ENCODE measurements at regions of chr15 and their contacts with region 1.

Region 1: DNA sequence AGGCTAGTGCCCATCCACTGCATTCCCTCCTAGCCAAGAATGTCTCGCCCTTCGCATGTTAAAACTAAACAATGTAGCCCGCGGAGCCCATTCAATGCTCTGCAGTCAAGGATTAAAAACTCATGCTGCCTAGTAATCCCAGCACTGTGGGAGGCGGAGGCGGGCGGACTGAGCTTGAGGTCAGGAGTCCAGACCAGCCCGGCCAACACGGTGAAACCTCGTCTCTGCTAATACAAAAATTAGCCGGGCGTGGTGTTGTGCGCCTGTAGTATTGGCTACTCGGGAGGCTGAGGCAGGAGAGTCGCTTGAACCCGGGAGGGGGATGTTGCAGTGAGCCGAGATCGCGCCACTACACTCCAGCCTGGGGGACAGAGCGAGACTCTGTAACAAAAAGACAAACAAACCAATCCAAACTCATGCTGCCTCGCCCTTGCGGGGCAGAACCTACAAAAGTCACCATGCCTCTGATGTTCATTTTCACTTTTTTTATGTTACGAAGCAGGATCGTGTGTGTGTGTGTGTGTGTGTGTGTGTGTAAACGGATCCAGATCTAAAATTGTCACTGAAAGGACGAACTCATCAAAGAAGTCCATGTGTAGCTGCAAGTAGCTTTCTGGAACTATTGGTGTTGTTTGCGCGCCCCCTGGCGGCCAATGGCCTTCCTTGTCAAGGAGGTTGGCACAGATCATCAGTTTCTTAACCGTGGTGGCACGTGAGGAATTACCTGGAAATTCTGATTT is 54.8 kb upstream of the SPESP1 start:
- DNase-seq: peak; percentile 90
- ATAC-seq: peak; percentile 75
- H3K4me3 ChIP-seq: no peak overlapping the region
- H3K4me3 Mint-ChIP-seq: peak overlapping the region; percentile 50
- H3K27ac ChIP-seq: no peak overlapping the region
- H3K27ac Mint-ChIP-seq: no peak overlapping the region
- H3K4me1 ChIP-seq: peaks cover 4% of the 10 kb centered on the region in 2 donors
- H3K4me1 Mint-ChIP-seq: peaks cover 3% of the 10 kb centered on the region
- H3K27me3 ChIP-seq: peaks cover 0 to 16% (median 8%) of the 10 kb centered on the region in 4 experiments
- H3K27me3 Mint-ChIP-seq: peaks cover 19% of the 10 kb centered on the region
- CTCF ChIP-seq: peak; percentile 85

Region 2: DNA sequence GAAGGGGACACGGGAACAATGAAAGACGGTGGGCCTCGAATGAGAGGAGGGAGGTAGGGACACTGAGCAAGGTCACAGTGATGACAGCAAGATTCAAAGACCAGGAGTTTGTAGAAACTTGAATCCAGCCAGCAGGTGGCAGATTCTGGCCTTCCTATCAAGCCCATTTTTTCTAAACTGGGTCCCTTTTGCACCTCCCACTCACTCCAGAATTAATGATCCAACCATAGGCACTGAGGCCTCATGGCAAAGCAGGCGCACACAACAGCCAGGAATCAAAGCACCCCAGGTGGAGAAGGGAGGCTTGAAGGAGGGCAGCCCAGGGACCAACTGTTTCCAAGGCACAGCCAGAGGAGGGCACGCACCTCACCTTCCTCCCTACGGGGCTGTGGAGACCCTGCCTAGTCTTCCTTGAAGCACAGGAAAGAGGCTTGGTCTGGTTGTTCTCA is 145.1 kb before region 1 on chr15:
- CTCF ChIA-PET with region 1: interaction called, 63 read pairs
- POLR2A ChIA-PET with region 1: no interaction called
- intact Hi-C with region 1: no loop called
- DNase-seq: peak; percentile 51
- ATAC-seq: no peak
- H3K4me3 ChIP-seq: no peak overlapping the region
- H3K4me3 Mint-ChIP-seq: no peak overlapping the region
- H3K27ac ChIP-seq: no peak overlapping the region
- H3K27ac Mint-ChIP-seq: no peak overlapping the region
- H3K4me1 ChIP-seq: peaks cover 15 to 23% of the 10 kb centered on the region in 2 donors
- H3K4me1 Mint-ChIP-seq: peaks cover 21% of the 10 kb centered on the region
- H3K27me3 ChIP-seq: peaks cover 0 to 2% (median 0%) of the 10 kb centered on the region in 4 experiments
- H3K27me3 Mint-ChIP-seq: peaks cover 4% of the 10 kb centered on the region
- CTCF ChIP-seq: peak; percentile 58

Region 3: GRCh38 chr15:68783226-68784058 is 92.1 kb before region 1 on chr15:
- CTCF ChIA-PET with region 1: interaction called, 138 read pairs
- POLR2A ChIA-PET with region 1: no interaction called
- intact Hi-C with region 1: loop called (anchors 1 kb)
- DNase-seq: peak; percentile 74
- ATAC-seq: peak; percentile 84
- H3K4me3 ChIP-seq: no peak overlapping the region
- H3K4me3 Mint-ChIP-seq: no peak overlapping the region
- H3K27ac ChIP-seq: peak overlapping the region in 1 of 2 donors; percentile 10
- H3K27ac Mint-ChIP-seq: peak overlapping the region; percentile 50
- H3K4me1 ChIP-seq: peaks cover 30 to 32% of the 10 kb centered on the region in 2 donors
- H3K4me1 Mint-ChIP-seq: peaks cover 32% of the 10 kb centered on the region
- H3K27me3 ChIP-seq: no peaks in the 10 kb centered on the region
- H3K27me3 Mint-ChIP-seq: no peaks in the 10 kb centered on the region
- CTCF ChIP-seq: peak; percentile 82

Region 4: GRCh38 chr15:68795298-68795848 is 80.2 kb before region 1 on chr15:
- CTCF ChIA-PET with region 1: interaction called, 23 read pairs
- POLR2A ChIA-PET with region 1: interaction called, 3 read pairs
- intact Hi-C with region 1: no loop called
- DNase-seq: peak; percentile 76
- ATAC-seq: peak; percentile 75
- H3K4me3 ChIP-seq: peak overlapping the region in 2 of 5 experiments; percentile 17 to 28
- H3K4me3 Mint-ChIP-seq: peak overlapping the region; percentile 73
- H3K27ac ChIP-seq: peak overlapping the region; percentile 58 to 74
- H3K27ac Mint-ChIP-seq: peak overlapping the region; percentile 80
- H3K4me1 ChIP-seq: peaks cover 68 to 82% of the 10 kb centered on the region in 2 donors
- H3K4me1 Mint-ChIP-seq: peaks cover 93% of the 10 kb centered on the region
- H3K27me3 ChIP-seq: no peaks in the 10 kb centered on the region
- H3K27me3 Mint-ChIP-seq: no peaks in the 10 kb centered on the region
- CTCF ChIP-seq: no peak

Measured in B cell (primary cell).